PC-9 (cell line): ENCODE measurements at regions of chr14 and their contacts with region 1.

Region 1: DNA sequence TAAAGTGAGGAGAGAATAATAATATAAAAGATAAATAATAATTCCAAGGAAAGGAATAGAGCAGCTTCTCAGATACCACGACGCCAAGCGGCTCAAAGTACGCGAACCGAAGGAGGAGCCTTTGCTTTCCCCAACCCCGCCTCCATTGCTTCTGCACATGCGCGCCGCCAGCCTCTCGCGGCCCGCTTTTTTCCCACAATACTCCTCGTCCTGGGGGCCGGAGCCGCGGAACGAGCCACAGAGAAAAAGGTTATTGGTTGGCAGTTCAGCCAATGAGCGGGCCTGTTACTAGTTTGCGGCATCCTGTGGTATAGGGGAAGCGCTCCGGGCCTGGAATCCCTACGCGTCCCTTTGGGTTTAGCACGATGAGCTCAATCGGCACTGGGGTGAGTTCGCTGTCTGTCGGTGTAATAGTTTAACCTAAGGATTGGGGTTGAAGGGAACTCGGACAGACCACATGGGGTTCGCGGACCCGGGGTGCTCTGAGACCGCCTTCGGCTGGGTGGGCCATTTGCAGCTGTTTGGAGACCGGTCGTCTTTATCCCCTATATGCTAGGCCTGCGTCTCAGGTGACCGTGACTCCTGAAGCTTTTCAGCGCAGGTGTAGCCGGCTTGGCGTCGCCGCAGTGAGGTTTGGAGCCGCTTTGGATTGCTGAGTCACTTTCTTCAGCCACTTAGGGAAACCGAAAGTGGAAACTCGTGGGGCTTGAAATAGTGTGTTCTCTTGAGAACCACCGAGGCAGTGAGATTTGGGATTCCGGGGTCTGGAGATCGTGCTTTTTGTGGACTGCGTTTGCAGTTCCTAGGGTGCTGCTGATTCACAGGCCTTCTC is at the start of gene PSMA3:
- DNase-seq: peak; percentile 93 to 96
- H3K4me3 ChIP-seq: peak within 1 kb of the TSS; percentile 87
- H3K27ac ChIP-seq: peak within 1 kb of the TSS; percentile 97
- H3K4me1 ChIP-seq: peaks cover 28% of the 10 kb centered on the region
- H3K27me3 ChIP-seq: no peaks in the 10 kb centered on the region
- CTCF ChIP-seq: no peak
- total RNA-seq, gene PSMA3: 202 and 277 TPM in 2 replicates

Region 2: DNA sequence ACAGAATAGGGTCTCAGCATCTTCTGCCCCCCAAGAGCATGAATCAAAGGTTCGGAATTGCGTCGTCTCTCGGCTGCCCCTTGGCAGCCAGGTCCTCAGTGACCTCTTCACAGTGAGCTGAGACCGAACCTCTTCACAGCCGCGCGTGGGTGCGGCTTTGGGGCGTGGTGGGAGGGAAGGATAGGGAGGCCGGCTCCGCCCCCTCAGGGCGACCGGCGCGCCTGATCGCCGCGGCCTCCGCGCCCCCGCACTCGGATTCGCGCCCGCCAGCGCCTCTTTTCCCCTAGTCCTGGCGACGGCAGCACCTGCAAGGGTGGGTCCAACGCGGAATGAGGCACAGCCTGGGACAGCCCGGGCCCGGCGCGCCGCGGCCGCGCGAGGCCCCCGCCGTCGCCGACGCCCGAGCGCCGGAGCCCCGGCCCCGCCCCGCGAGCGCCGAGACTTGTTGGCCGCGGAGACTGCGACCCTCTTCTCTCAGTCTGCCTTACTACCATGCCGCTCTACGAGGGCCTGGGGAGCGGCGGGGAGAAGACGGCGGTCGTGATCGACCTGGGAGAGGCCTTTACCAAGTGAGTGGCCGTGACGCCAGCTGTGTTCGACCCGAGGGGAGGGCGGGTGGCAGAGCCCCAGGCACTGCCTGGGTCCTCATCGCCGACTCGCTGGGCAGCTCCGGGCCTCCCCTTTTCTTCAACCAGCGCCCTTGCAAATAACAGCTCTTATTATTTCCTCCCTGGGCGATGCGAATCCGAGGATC is 44.9 kb before region 1 on chr14 and contains the start of gene ACTR10:
- CTCF ChIA-PET with region 1: no interaction called
- POLR2A ChIA-PET with region 1: interaction called, 3 read pairs
- intact Hi-C with region 1: loop called (anchors 2 kb)
- DNase-seq: peak; percentile 59 to 90
- H3K4me3 ChIP-seq: peak within 1 kb of the TSS; percentile 100
- H3K27ac ChIP-seq: peak within 1 kb of the TSS; percentile 65
- H3K4me1 ChIP-seq: peaks cover 18% of the 10 kb centered on the region
- H3K27me3 ChIP-seq: no peaks in the 10 kb centered on the region
- CTCF ChIP-seq: no peak
- total RNA-seq, gene ACTR10: 30.4 and 36.3 TPM in 2 replicates

Region 3: DNA sequence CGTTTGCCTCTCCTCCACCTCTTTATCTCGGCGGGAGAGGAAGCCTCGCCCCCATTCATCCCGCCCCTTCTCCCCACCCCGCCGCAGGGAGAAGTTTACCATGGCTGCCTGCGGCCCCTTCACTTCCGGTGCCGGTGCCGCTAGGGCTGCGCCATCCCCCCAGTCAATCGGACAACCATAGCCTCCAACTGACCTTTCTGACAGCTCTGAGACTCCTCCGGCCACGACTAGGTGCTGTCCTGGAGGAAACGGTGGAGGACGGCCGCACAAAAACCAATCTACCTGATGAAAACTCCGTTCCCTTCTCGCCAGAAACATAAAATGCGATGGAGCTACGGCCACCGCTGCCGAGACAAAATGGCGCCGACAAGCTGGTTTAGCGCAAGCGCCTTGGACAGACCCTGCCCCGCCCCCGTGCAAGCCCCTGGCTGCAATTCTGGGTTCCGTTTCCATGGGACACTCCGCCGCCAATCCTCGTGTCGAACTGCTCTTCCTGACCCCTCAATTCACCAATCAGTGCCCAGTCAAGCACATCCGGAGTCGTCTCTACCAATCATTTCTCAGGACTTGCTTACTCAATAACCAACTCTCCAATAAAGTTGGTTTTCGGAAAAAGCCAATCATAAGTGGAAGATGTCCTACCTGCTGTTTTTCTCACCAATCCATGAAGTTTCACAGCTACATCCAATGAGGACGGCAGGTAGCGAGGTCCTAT is 53.1 kb after region 1 on chr14:
- CTCF ChIA-PET with region 1: no interaction called
- POLR2A ChIA-PET with region 1: interaction called, 13 read pairs
- intact Hi-C with region 1: loop called (anchors 1 kb)
- DNase-seq: peak; percentile 97 to 100
- H3K4me3 ChIP-seq: peak overlapping the region; percentile 80
- H3K27ac ChIP-seq: peak overlapping the region; percentile 97
- H3K4me1 ChIP-seq: peaks cover 21% of the 10 kb centered on the region
- H3K27me3 ChIP-seq: no peaks in the 10 kb centered on the region
- CTCF ChIP-seq: no peak

Region 4: GRCh38 chr14:58331111-58331510 is 86.3 kb after region 1 on chr14:
- CTCF ChIA-PET with region 1: no interaction called
- POLR2A ChIA-PET with region 1: interaction called, 14 read pairs
- intact Hi-C with region 1: no loop called
- DNase-seq: no peak
- H3K4me3 ChIP-seq: no peak overlapping the region
- H3K27ac ChIP-seq: no peak overlapping the region
- H3K4me1 ChIP-seq: no peaks in the 10 kb centered on the region
- H3K27me3 ChIP-seq: no peaks in the 10 kb centered on the region
- CTCF ChIP-seq: no peak